Right ventricle myocardium inferior (tissue), 1 donor: ENCODE measurements at regions of chr1 and their contacts with region 1.

Region 1: GRCh38 chr1:54488779-54489626 is 59.0 kb upstream of the ACOT11 start:
- DNase-seq: peak; percentile 93
- ATAC-seq: peak; percentile 81

Region 2: DNA sequence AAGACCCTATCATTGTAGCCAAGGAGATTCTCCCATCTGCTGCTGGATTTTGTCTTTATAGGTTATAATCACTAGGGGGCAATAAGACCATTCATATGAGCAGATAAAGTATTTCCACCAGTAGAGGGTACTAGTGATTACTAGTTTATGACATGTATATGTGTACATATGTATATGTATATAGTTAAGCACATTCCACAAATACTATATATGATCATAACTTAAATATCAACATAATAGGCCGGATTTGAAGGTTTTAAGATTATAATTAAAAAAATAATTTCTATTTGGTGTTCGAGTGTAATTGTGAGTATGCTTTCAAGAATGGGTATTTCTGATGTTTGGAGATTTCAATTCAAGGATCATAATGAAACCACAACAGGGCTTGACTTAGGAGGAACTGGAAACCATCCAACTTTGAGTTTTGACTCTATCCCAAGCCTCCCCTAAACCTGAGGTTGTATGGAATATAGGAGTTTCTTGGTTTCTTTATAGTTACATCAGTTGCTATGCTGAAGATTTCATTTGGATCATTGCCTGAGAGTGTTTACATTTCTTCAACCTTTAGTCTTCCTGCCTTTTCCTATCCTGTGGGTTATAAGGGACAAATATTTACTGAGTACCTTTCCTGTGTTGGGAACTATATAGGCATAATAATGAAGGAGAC is 418.7 kb before region 1 on chr1:
- intact Hi-C with region 1: loop called (anchors 1 kb)
- DNase-seq: no peak
- ATAC-seq: peak; percentile 54

Region 3: DNA sequence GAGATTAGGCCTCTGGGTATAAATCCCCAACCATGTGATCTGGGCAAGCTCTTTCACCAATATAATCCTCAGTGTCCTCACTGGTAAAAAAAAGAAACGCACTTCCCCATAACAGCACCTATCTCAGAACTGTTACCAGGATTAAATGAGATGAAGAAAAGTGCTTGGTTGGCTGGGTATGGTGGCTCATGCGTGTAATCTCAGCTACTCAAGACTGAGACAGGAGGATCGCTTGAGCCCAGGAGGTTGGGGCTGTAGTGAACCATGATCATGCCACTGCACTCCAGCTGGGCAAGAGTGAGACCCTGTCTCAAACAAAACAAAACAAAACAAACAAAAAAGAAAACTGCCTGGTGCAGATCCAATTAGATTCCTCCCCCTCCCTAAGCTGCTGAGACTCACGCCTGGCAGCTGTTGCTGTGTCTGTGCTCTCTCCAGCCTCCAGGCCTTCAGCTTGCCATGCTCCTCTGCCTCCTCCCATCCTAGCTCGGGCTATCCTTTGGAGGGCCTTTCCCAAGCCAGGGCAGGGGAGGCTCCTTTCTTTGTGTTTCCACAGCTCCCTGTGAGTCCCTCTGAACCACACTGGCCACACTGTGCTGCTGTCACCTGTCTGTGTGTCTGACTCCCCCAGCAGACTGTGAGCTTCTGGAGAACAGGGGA is 308.2 kb before region 1 on chr1:
- intact Hi-C with region 1: loop called (anchors 5 kb)
- DNase-seq: no peak
- ATAC-seq: no peak

Region 4: DNA sequence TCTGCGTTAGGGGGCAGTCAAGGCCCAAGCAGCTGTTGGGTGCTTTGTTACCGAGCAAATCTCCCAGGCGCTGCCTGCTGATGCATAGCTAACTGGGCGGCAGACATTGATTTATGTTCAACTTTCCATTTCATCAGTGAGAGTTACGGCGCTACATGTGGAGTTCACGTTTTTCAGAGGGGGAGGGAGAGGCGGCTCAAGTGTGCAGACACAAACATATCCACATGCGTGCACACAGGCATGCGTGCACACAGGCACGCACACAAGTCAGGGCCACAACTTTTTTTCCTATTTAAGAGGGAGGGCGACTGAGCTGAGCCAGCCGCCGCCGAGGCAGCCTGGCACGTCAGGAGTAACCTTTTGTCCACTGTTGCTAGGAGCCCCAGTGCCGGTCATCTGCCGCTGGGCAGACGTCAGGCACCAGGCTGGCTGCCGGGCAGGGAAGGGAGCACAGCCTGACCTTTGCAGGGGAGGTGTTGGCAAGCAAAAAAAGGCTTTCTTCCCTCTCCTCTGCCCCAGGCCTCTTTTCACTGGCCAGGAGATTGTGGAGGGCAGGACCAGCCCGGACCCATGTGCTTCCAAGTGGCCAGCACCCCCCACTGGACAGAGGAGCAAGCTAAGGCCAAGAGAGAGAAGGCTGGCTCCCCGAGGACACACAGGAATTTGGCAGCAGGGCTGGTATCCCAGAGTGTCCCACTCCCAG is 215.8 kb before region 1 on chr1:
- intact Hi-C with region 1: loop called (anchors 5 kb)
- DNase-seq: peak; percentile 81
- ATAC-seq: peak; percentile 45

Region 5: GRCh38 chr1:54406339-54407153 is 82.5 kb before region 1 on chr1 and contains the start of gene SSBP3:
- intact Hi-C with region 1: loop called (anchors 1 kb)
- DNase-seq: peak; percentile 95
- ATAC-seq: peak; percentile 95
- total RNA-seq, gene SSBP3: 53.6 TPM

Region 6: DNA sequence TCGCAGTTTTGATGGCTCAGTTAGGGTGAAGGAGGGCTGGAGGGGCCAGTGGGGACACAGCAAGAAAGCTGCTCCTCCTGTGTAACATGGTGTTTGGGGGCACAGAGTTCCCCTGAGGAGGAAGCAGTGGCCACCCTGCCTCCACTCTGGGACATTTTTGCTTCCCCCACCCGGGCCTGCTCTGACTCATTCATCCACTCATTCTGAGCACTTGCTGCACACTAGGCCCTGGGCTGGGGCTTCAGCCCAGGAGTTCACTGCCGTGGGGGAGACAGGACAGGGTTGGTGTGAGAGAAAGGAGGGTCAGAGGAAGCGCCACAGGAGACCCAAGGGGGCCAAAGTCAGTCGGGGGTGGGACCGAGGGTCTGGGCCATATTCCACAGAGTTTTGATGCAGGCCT is 17.6 kb after region 1 on chr1:
- intact Hi-C with region 1: no loop called
- DNase-seq: no peak
- ATAC-seq: no peak